Activated T-helper 1 cell treated with anti-CD3 and anti-CD28 coated beads, Interleukin-12 subunit alpha, Interleukin-12 subunit beta, Interleukin-2, Interleukin-4 antibody, amounts not matched to agents 30 ng/mL and 10 ng/mL and 1 ng/mL, durations not matched to agents 14 hours and 24 hours and 36 hours (primary cell): ENCODE measurements at regions of chr2 and their contacts with region 1.

Region 1: DNA sequence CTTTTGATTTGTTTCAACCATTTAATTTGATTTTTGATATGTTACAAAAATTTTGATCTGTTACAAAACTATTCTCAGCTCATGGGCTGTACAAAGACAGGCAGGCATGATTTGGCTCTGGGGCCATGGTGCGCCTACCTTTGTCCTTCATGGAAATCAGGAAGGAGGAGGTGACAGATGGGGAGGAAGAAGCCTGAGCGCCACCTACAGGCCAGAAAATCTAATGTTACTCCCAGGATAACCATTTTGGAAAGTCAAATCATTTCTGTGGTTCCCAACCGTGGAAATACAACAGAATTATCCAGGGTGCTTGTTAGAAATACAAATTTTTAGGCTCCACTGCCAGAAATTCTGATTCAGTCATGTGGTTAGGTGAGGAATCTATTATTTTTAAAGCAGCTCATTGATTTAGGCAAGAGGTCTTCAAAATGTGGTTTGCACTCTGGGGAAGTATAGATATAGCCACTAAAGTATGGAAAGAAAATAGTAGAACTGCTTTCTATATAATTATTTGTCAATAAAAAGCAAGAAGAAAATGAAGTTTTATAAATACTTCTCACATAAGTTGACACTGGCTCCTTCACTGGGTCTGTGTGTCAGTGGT is 93.9 kb downstream of the EVA1A start:
- DNase-seq: no peak
- H3K4me3 Mint-ChIP-seq: no peak overlapping the region
- H3K27ac Mint-ChIP-seq: no peak overlapping the region
- H3K4me1 Mint-ChIP-seq: no peaks in the 10 kb centered on the region
- H3K27me3 Mint-ChIP-seq: peaks cover 10% of the 10 kb centered on the region

Region 2: DNA sequence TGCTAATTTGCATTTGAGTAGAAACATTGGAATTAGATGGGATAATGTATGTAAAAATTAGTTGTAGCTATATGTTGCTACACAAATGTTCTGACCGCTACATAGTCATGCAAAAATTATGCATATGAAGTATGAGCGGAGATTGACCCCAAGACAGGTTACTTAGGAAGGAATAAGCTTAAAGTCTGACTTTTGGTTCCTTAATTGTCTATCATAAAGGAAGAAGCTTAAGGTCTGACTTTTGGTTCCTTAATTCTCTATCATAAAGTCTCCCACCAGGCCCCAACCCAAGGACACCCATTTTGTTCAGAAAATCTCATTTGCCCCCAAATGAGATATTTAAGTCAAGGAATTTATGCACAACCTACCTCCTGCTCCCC is 12.6 kb before region 1 on chr2:
- intact Hi-C with region 1: no loop called
- DNase-seq: no peak
- H3K4me3 Mint-ChIP-seq: no peak overlapping the region
- H3K27ac Mint-ChIP-seq: no peak overlapping the region
- H3K4me1 Mint-ChIP-seq: no peaks in the 10 kb centered on the region
- H3K27me3 Mint-ChIP-seq: peaks cover under 1% of the 10 kb centered on the region

Region 3: GRCh38 chr2:75608684-75609333 is 142.0 kb after region 1 on chr2:
- intact Hi-C with region 1: loop called (anchors 1 kb)
- DNase-seq: peak; percentile 27
- H3K4me3 Mint-ChIP-seq: no peak overlapping the region
- H3K27ac Mint-ChIP-seq: no peak overlapping the region
- H3K4me1 Mint-ChIP-seq: no peaks in the 10 kb centered on the region
- H3K27me3 Mint-ChIP-seq: peaks cover 14% of the 10 kb centered on the region

Region 4: GRCh38 chr2:75627895-75628504 is 161.2 kb after region 1 on chr2:
- intact Hi-C with region 1: loop called (anchors 5 kb)
- DNase-seq: peak; percentile 26
- H3K4me3 Mint-ChIP-seq: no peak overlapping the region
- H3K27ac Mint-ChIP-seq: no peak overlapping the region
- H3K4me1 Mint-ChIP-seq: no peaks in the 10 kb centered on the region
- H3K27me3 Mint-ChIP-seq: peaks cover 13% of the 10 kb centered on the region